ENCODE measurements at regions of chr2 and their contacts with region 1.

Region 1: DNA sequence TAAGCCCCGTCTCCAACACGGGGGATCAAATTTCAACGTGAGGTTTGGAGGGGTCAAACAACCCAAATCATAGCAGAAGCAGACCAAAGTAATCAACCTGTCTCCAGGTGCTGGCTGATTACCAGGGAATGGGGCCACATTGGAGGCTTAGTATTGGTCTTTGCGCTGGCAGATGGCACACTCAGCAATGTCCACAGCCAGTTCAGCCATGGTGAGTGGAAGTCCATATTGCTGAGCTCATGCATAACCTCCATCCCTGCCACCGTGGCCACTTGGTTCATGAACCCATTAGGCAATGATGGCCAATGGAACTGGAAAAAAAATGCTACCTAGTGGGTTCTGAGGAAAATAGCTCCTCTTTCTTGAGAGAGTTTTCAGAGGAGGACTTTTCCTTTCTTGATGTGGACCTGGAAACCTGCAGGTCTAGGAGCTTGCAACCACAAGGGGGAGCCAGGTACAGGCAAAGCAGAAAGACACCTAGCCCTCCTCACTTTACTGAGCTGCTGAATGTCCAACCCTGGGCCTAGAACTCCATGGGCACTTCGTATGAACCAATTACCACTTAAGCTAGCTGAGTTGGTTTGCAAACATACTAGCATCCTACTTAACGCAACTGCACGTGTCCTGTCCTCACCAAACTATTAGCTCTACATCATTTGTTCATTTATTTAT is 128.0 kb upstream of the GYPC start:
- H3K4me3 ChIP-seq: no peak overlapping the region
- H3K27ac ChIP-seq: no peak overlapping the region
- H3K4me1 ChIP-seq: no peaks in the 10 kb centered on the region
- CTCF ChIP-seq: no peak

Region 2: DNA sequence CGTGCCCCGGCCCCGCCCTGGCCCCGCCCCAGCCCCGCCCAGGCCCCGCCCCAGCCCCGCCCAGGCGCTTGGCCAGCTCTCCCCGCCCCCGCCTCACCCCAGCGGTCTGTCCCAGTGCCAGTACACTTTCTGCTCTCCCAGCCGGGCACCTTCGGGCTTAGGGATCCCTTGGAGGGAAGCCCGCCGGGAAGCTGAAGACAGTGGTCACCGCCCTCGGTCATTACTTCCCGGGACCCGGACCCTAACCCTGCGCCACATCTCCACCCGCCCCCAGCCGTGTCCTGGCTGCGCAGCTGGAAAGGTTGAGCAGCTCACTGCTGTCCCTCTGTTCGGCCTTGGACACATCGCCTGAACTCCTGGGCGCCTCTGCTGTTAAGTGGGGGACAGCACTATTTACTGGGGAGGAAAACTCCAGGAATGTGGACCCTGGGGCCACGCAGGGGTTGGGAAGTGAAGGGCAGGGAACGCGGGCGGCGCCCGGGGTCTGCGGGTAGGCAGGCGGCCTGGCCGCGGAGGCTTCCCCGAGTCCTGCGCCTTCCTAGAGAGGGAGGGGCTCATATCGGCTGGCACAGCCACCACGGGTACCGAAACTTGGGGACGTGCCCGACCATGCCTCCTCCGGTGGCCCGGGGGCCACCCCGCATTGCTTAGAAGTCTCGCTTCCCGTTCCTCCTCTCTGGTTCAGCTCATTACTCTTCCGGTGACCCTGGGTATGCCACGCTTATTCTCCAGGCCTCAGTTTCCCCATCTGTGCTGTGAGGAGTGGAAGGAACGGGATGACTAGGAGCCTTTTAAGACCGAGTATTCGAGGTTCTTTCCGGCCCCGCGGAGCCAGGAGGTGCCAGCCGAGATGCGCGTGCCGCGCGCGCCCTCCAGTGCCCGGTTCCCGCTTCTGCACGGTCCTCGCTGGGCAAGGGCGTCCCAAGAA is 249.0 kb after region 1 on chr2:
- CTCF ChIA-PET with region 1: interaction called, 41 read pairs
- POLR2A ChIA-PET with region 1: no interaction called
- H3K4me3 ChIP-seq: peak overlapping the region; percentile 33
- H3K27ac ChIP-seq: no peak overlapping the region
- H3K4me1 ChIP-seq: no peaks in the 10 kb centered on the region
- CTCF ChIP-seq: peak; percentile 79

Measured in HEK293 (cell line).